Activated naive CD4-positive, alpha-beta T cell treated with anti-CD3 and anti-CD28 coated beads for 36 hours (primary cell): ENCODE measurements at regions of chr12 and their contacts with region 1.

Region 1: DNA sequence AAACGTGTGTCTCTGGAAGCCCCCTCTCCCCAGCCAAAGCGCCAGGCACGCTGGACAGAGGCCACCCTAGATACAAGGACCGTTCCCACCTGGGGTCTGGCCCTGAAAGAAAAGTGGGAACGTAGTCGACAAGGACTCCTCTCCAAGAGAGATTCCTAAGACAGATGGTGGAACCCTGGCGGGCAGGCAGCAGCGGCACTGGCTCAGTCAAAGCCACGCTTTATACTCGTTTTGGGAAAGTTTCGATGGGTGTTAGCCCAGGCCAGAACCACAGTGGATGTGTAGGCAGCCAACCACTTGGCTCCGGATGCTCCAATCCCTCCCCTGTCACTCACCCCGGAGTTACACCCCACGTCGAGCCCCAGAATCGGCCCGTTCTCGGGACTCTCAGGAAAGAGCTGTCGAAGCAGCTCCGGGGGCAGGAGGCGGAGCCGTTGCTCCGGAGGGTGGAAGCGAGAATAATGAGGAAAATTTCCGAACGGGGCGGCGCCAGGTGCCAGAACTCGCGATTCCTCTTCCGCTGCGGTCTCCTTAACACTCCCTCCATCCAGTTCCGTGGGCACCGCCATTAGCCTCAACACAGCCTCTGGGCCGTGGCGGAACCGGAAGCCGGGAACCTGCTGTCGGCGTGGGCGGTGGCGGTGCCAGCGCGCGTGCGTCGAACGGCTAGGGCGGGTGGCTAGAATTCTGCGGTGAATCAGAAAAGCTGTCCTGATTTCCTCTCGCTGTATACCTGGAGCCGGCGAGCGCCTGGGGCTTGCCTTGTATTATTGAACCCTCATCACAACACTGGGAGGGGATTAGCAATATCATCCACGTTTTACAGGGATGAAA is at the start of gene BCDIN3D:
- DNase-seq: peak; percentile 97
- H3K4me3 Mint-ChIP-seq: peak within 1 kb of the TSS; percentile 91
- H3K27ac Mint-ChIP-seq: peak within 1 kb of the TSS; percentile 93
- H3K4me1 Mint-ChIP-seq: peaks cover 34% of the 10 kb centered on the region
- H3K27me3 Mint-ChIP-seq: no peaks in the 10 kb centered on the region
- total RNA-seq, gene BCDIN3D: 2.4 to 4.1 TPM

Region 2: DNA sequence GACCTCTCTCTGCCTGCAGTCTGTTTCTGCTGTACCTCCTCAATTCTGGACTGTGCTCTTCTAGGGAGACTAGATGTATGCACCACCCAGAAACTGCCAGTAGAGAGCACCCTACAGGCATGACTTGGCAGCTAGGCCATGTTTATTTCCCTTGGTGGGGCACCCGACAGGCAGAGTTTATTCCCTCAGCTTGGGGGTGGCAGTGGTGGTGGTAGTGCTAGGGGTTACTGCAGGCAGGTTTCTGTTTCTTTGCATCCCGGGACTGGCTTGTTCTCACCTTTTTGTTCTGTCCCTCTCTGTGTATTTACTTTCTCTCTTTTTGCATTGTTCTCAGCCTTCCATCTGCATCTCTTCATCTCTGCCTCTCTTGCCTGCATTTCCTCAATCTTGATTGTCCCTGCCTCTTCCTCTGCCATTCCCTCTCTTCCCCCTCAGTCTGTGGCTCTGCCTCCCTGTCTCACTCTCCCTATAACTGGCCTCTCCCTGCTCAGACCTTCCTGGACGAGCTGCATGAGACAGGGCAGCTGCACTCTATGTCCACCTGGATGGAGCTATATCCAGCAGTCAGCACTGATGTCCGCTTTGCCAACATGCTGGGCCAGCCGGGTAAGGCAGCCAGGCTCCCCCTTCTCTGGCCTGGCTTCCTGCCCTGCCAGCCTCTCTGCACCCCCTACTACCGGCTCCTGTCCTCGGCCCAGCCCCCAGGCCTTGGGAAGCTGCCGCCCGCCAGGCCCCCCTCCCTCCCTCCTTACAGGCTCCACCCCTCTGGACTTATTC is 205.6 kb before region 1 on chr12:
- CTCF ChIA-PET with region 1: no interaction called
- intact Hi-C with region 1: loop called (anchors 2 kb)
- DNase-seq: peak; percentile 80
- H3K4me3 Mint-ChIP-seq: no peak overlapping the region
- H3K27ac Mint-ChIP-seq: no peak overlapping the region
- H3K4me1 Mint-ChIP-seq: peaks cover 14% of the 10 kb centered on the region
- H3K27me3 Mint-ChIP-seq: no peaks in the 10 kb centered on the region

Region 3: DNA sequence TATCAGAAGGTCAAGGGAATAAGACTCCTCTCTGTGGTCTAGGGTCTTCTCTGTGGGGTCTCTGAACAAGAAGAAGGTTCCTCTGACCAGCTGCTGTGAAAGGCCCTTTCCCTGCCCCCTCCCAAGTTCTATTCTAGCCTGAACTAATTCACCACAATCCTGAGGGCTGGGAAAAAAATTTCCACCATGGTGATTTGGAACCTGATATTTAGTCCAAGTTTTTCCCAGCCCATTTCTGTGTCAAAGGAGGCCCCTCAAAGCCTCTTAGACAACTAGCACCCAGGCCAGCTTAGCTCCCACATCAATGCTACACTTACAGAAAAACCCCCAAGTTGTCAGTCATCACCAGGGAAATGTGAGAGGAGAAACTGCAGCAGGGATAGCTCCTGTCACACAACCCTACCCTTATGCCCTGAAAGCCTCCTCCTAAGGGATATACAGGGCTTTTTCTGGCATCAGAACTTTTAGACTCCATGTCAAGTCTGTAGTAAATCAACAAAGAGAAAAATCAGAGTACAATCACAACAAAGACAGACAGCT is 140.0 kb before region 1 on chr12:
- CTCF ChIA-PET with region 1: no interaction called
- intact Hi-C with region 1: no loop called
- DNase-seq: no peak
- H3K4me3 Mint-ChIP-seq: no peak overlapping the region
- H3K27ac Mint-ChIP-seq: no peak overlapping the region
- H3K4me1 Mint-ChIP-seq: peaks cover 66% of the 10 kb centered on the region
- H3K27me3 Mint-ChIP-seq: no peaks in the 10 kb centered on the region

Region 4: GRCh38 chr12:49740930-49741881 is 101.5 kb before region 1 on chr12 and contains the start of gene TMBIM6:
- CTCF ChIA-PET with region 1: interaction called, 8 read pairs
- intact Hi-C with region 1: loop called (anchors 1 kb)
- DNase-seq: peak; percentile 99
- H3K4me3 Mint-ChIP-seq: peak within 1 kb of the TSS; percentile 100
- H3K27ac Mint-ChIP-seq: peak within 1 kb of the TSS; percentile 100
- H3K4me1 Mint-ChIP-seq: peaks cover 34% of the 10 kb centered on the region
- H3K27me3 Mint-ChIP-seq: no peaks in the 10 kb centered on the region
- total RNA-seq, gene TMBIM6: 466 to 498 TPM

Region 5: DNA sequence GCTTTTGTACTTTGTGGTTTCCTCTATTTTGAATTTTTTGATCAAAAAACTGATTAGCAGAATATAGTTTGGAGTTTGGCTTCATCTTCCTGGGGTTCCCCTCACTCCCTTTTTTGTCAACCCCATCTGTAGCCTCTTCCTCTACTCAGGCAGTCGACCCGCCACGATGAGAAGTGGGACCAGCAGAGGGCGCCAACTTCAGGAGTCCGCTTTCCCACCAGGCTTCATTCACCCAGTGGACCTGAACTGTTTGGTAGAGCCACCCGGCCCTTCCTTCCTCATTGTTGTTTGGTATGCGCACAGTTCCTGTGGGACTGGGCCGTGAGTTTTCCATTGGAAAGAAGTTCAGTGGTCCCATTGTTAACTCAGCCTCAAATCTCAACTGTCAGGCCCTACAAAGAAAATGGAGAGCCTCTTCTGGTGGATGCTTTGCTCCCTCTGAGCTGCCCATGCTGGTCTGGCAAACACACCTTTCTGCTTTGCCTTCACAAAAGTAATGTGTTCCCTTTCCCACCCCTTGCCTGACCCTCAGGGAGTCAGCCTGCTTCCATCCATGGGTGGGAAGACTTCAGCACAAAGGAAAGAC is 79.6 kb before region 1 on chr12:
- CTCF ChIA-PET with region 1: interaction called, 23 read pairs
- intact Hi-C with region 1: no loop called
- DNase-seq: peak; percentile 91
- H3K4me3 Mint-ChIP-seq: no peak overlapping the region
- H3K27ac Mint-ChIP-seq: peak overlapping the region; percentile 76
- H3K4me1 Mint-ChIP-seq: peaks cover 61% of the 10 kb centered on the region
- H3K27me3 Mint-ChIP-seq: no peaks in the 10 kb centered on the region

Region 6: DNA sequence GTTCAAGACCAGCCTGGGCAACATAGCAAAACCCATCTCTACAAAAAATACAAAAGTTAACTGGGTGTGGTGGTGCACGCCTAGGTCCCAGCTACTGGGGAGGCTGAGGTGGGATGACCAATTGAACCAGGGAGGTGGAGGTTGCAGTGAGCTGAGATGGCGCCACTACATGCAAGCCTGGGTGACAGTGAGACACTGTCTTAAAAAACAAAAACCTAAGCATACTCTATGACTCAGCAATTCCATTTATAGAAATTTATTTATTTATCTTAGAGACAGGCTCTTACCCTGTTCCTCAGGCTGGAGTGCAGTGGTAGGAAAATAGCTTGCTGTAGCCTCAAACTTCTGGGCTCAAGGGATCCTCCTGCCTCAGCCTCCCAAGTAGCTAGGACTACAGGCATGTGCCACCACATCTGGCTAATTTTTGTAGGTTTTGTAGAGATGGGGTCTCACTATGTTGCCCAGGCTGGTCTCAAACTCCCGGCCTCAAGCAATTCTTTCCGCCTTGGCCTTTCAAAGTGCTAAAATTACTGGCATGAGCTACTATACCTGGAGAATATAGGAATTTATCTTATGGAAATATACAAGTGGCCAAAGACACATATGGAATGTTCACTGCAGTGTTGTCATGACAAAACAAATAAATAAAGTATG is 57.9 kb before region 1 on chr12:
- CTCF ChIA-PET with region 1: no interaction called
- intact Hi-C with region 1: no loop called
- DNase-seq: no peak
- H3K4me3 Mint-ChIP-seq: no peak overlapping the region
- H3K27ac Mint-ChIP-seq: no peak overlapping the region
- H3K4me1 Mint-ChIP-seq: no peaks in the 10 kb centered on the region
- H3K27me3 Mint-ChIP-seq: peaks cover 4% of the 10 kb centered on the region

Region 7: GRCh38 chr12:49866859-49867579 is 24.3 kb after region 1 on chr12:
- CTCF ChIA-PET with region 1: interaction called, 12 read pairs
- intact Hi-C with region 1: no loop called
- DNase-seq: peak; percentile 86
- H3K4me3 Mint-ChIP-seq: no peak overlapping the region
- H3K27ac Mint-ChIP-seq: no peak overlapping the region
- H3K4me1 Mint-ChIP-seq: no peaks in the 10 kb centered on the region
- H3K27me3 Mint-ChIP-seq: no peaks in the 10 kb centered on the region

Region 8: GRCh38 chr12:50201978-50202521 is 359.3 kb after region 1 on chr12:
- CTCF ChIA-PET with region 1: no interaction called
- intact Hi-C with region 1: no loop called
- DNase-seq: no peak
- H3K4me3 Mint-ChIP-seq: no peak overlapping the region
- H3K27ac Mint-ChIP-seq: no peak overlapping the region
- H3K4me1 Mint-ChIP-seq: no peaks in the 10 kb centered on the region
- H3K27me3 Mint-ChIP-seq: no peaks in the 10 kb centered on the region